K562 (cell line): ENCODE measurements at regions of chr4 and their contacts with region 1.

Region 1: GRCh38 chr4:38605753-38606586 is 58.0 kb upstream of the KLF3 start:
- DNase-seq: peak; percentile 24 to 58 (median 32)
- ATAC-seq: peak; percentile 68
- H3K4me3 ChIP-seq: no peak overlapping the region
- H3K27ac ChIP-seq: peak overlapping the region; percentile 67
- H3K4me1 ChIP-seq: peaks cover 26 to 40% of the 10 kb centered on the region in 2 experiments; a peak in 4 of 5 replicates
- H3K27me3 ChIP-seq: no peaks in the 10 kb centered on the region
- CTCF ChIP-seq: no peak
- EP300 ChIP-seq: no peak
- POLR2A ChIP-seq: no peak
- RAD21 ChIP-seq: no peak; a peak in 1 of 4 replicates

Region 2: GRCh38 chr4:38523524-38524448 is 82.2 kb before region 1 on chr4:
- CTCF ChIA-PET with region 1: no interaction called
- POLR2A ChIA-PET with region 1: no interaction called
- in situ Hi-C with region 1: no loop called
- intact Hi-C with region 1: loop called (anchors 5 kb)
- DNase-seq: peak; percentile 55 to 79 (median 68)
- ATAC-seq: peak; percentile 87
- H3K4me3 ChIP-seq: peak overlapping the region; percentile 2; the same call in 1 of the 2 replicates
- H3K27ac ChIP-seq: peak overlapping the region; percentile 91
- H3K4me1 ChIP-seq: peaks cover 13 to 35% of the 10 kb centered on the region in 2 experiments
- H3K27me3 ChIP-seq: no peaks in the 10 kb centered on the region
- CTCF ChIP-seq: no peak
- EP300 ChIP-seq: peak; percentile 13; the same call in 1 of the 2 replicates
- POLR2A ChIP-seq: no peak
- RAD21 ChIP-seq: no peak